ENCODE measurements at regions of chr2 and their contacts with region 1.

Region 1: DNA sequence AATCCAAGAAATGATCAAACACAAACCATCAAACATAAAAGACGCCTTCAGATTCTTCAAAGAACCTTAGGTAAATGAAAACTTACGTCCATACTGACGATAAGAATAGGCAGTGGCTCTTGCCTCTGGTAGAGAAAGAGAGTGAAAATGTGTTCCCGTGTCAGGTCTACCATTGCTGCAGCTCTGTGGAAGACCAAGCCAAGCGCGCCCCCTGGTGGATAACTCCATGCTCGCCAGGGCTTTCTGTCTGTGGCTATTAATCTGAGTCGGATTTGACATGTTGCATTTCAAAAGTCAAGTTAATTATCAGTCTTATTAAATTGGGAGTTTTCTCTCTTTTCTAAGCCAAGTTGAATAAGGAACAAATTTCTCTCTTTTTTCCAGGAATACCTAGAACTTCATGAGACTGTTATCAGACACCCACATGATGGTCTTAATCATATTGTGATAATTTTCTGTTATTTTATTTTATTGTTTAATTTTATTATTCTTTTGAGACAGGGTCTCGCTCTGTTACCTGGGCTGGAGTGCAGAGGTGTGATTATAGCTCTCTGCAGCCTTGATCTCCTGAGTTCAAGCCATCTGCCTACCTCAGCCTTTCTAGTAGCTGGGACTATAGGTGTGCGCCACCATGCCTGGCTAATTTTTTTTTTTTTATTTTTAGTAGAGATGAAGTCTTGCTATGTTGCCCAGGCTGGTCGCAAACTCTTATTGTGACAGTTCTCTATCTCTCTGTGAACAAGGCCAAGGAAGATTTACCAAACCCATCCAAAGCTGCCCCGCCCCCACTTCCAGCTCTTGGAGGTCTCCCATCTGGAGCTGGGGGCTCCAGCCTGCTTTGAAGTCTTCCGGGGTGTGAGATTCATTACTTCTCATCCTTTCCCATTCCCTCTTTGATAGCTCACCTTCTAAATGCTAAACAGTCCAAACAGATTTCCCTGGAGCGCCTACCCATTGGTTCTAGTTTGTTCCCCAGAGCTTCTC is 15.8 kb upstream of the ZAP70 start:
- DNase-seq: peak; percentile 97
- ATAC-seq: peak; percentile 89
- H3K4me3 Mint-ChIP-seq: peak overlapping the region; percentile 34
- H3K27ac Mint-ChIP-seq: no peak overlapping the region
- H3K4me1 Mint-ChIP-seq: peaks cover 10% of the 10 kb centered on the region
- H3K27me3 Mint-ChIP-seq: no peaks in the 10 kb centered on the region
- CTCF ChIP-seq: peak; percentile 84

Region 2: GRCh38 chr2:97645695-97646629 is 51.6 kb before region 1 on chr2 and contains the start of gene COX5B:
- CTCF ChIA-PET with region 1: interaction called, 33 read pairs
- POLR2A ChIA-PET with region 1: interaction called, 7 read pairs
- intact Hi-C with region 1: no loop called
- DNase-seq: peak; percentile 100
- ATAC-seq: peak; percentile 97
- H3K4me3 Mint-ChIP-seq: peak within 1 kb of the TSS; percentile 90
- H3K27ac Mint-ChIP-seq: peak within 1 kb of the TSS; percentile 98
- H3K4me1 Mint-ChIP-seq: peaks cover 15% of the 10 kb centered on the region
- H3K27me3 Mint-ChIP-seq: no peaks in the 10 kb centered on the region
- CTCF ChIP-seq: no peak
- total RNA-seq, gene COX5B: 233 to 238 TPM

Region 3: GRCh38 chr2:97663965-97664635 is 33.4 kb before region 1 on chr2 and contains the start of gene ACTR1B:
- CTCF ChIA-PET with region 1: interaction called, 137 read pairs
- POLR2A ChIA-PET with region 1: interaction called, 21 read pairs
- intact Hi-C with region 1: loop called (anchors 1 kb)
- DNase-seq: peak; percentile 99
- ATAC-seq: peak; percentile 82
- H3K4me3 Mint-ChIP-seq: peak within 1 kb of the TSS; percentile 91
- H3K27ac Mint-ChIP-seq: peak within 1 kb of the TSS; percentile 99
- H3K4me1 Mint-ChIP-seq: peaks cover 27% of the 10 kb centered on the region
- H3K27me3 Mint-ChIP-seq: no peaks in the 10 kb centered on the region
- CTCF ChIP-seq: peak; percentile 65
- total RNA-seq, gene ACTR1B: 143 to 150 TPM

Region 4: DNA sequence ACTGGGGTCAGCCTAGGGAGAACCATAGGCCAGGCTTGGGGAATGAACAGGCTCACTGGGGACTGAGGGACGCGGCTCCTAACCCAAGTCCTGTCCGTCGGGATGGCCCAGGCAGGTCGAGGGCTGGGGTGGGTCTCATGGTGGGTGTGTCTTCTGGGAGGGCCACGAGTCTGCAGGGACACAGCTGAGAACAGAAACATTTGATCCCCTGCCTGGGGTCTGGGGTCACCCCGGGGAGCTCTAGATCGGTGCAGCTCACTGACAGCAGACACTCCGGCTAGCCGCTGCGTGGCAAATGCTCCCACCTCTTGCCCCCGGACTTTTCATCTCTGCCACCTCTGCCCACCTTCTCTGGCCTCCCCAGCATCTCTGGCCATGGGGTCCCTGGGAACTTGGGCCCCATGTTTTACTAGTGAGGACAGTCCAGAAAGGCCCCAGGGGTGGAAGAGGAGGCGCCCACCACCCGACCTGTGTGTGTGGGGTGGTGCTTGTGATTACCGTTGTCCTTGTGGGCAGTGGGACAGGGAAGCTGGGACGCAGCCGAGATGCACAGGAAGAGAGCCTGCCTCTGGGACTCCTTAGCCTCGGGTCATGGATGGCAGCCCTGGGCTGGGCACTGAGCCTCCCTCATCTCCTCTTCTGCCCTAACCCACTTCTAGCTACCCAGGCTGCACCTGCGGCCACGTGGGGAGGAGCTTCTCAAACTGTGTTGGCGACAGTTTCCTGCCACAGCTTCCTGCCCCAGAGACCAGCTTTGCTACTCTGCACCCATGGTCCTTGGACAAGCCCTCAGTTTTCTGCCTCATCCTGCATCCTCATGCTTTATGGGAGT is 20.7 kb after region 1 on chr2:
- CTCF ChIA-PET with region 1: interaction called, 154 read pairs
- POLR2A ChIA-PET with region 1: interaction called, 10 read pairs
- intact Hi-C with region 1: no loop called
- DNase-seq: peak; percentile 91
- ATAC-seq: peak; percentile 67
- H3K4me3 Mint-ChIP-seq: peak overlapping the region; percentile 89
- H3K27ac Mint-ChIP-seq: peak overlapping the region; percentile 100
- H3K4me1 Mint-ChIP-seq: peaks cover 58% of the 10 kb centered on the region
- H3K27me3 Mint-ChIP-seq: no peaks in the 10 kb centered on the region
- CTCF ChIP-seq: no peak

Region 5: GRCh38 chr2:97740590-97741182 is 43.1 kb after region 1 on chr2:
- CTCF ChIA-PET with region 1: interaction called, 73 read pairs
- POLR2A ChIA-PET with region 1: interaction called, 5 read pairs
- intact Hi-C with region 1: no loop called
- DNase-seq: peak; percentile 66
- ATAC-seq: peak; percentile 37
- H3K4me3 Mint-ChIP-seq: no peak overlapping the region
- H3K27ac Mint-ChIP-seq: peak overlapping the region; percentile 59
- H3K4me1 Mint-ChIP-seq: peaks cover 52% of the 10 kb centered on the region
- H3K27me3 Mint-ChIP-seq: no peaks in the 10 kb centered on the region
- CTCF ChIP-seq: peak; percentile 85

Region 6: GRCh38 chr2:97766567-97766966 is 69.0 kb after region 1 on chr2:
- CTCF ChIA-PET with region 1: interaction called, 17 read pairs
- POLR2A ChIA-PET with region 1: interaction called, 4 read pairs
- intact Hi-C with region 1: no loop called
- DNase-seq: no peak
- ATAC-seq: no peak
- H3K4me3 Mint-ChIP-seq: no peak overlapping the region
- H3K27ac Mint-ChIP-seq: no peak overlapping the region
- H3K4me1 Mint-ChIP-seq: peaks cover 20% of the 10 kb centered on the region
- H3K27me3 Mint-ChIP-seq: no peaks in the 10 kb centered on the region
- CTCF ChIP-seq: no peak

Measured in activated CD8-positive, alpha-beta T cell treated with anti-CD3 and anti-CD28 coated beads for 36 hours (primary cell).